Right ventricle myocardium superior (tissue), 1 donor: ENCODE measurements at regions of chr7 and their contacts with region 1.

Region 1: DNA sequence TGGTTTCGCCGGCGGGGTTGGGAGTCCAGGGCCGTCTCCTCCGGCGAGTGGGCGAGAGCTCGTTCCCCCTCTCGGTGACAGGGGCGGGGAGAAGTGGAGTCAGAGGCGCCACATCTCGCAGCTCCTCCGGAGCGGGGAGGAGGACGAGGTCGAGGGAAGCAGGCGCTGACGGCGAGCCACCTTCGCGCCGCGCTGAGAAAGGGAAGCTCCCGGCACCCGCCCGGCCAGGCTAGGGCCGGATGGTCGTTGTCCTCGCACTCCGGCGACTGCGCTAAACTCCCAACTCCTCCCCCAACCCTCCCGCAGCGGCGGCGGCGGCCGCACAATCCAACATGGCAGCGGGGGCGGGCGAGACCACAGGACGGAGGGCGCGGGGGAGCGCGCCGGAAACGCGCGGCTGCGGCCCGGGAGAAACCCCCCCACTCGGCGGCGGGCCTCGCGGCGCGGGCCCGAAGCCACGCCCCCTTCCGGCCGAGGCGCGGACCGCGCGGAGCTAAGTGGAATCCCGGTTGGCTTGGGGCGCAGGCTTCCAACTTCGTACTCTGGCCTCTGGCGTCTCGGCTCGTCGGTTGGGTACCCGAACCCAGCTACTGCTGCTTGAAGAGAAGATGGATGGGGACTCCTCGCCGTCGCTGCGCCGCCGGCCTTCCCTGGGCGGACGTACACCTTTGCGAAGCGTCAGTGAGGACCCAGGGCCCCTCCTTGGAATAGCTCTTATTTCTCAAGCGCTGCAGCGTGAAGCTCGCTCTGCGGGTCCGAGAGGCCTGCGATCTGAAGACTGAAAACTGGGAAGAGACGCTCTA is at the start of gene WASL:
- DNase-seq: peak; percentile 95
- ATAC-seq: peak; percentile 96
- total RNA-seq, gene WASL: 25.7 TPM

Region 2: GRCh38 chr7:123682690-123683089 is 66.2 kb before region 1 on chr7:
- intact Hi-C with region 1: loop called (anchors 10 kb)
- DNase-seq: no peak
- ATAC-seq: peak; percentile 65